ENCODE measurements at regions of chr12 and their contacts with region 1.

Region 1: GRCh38 chr12:31874961-31875608 is 84.1 kb upstream of the RESF1 start:
- DNase-seq: peak; percentile 93
- H3K4me3 ChIP-seq: no peak overlapping the region
- H3K27ac ChIP-seq: peak overlapping the region; percentile 83
- H3K4me1 ChIP-seq: peaks cover 28% of the 10 kb centered on the region
- H3K27me3 ChIP-seq: no peaks in the 10 kb centered on the region
- CTCF ChIP-seq: no peak
- POLR2A ChIP-seq: no peak

Region 2: DNA sequence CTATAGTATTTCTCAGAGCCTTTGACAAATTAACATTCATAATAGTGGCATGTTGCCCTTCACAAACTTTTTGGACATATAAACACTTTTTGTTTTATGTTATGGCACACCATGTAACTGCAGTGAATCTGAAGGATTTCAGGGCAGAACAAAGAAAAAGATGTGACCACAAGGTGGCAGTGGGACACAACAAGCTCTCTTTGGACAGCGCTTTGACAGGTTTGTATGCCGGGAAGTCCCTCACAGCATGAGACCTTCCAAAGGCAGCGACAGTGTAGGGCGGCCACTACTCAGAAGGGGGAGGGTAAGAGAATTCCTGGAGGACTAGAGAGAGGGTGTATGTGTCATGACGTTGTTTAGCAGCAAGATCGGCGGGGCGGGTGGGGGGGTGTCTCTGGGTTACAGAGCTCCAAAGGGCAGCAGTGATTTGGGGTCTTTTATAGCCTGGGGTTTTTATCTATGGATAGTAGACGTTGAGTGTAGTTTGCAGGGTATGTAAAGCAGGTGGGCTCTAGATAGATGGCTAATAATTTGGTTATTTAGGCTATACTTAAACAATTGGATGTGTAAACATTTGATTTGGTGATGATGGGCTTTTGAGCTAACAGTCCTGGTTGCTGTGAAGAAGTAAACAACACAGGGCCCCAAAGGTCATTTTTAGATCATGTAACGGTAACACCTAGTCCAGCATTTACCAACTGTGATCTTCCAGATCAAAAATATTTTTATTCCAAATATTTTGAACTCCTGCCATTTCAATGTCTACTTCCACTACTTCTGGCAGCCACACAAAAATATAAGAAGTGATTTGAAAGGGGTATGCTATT is 192.7 kb before region 1 on chr12:
- CTCF ChIA-PET with region 1: interaction called, 3 read pairs
- POLR2A ChIA-PET with region 1: no interaction called
- dilution Hi-C with region 1: no loop called
- intact Hi-C with region 1: loop called (anchors 10 kb)
- DNase-seq: peak; percentile 87
- H3K4me3 ChIP-seq: no peak overlapping the region
- H3K27ac ChIP-seq: no peak overlapping the region
- H3K4me1 ChIP-seq: no peaks in the 10 kb centered on the region
- H3K27me3 ChIP-seq: no peaks in the 10 kb centered on the region
- CTCF ChIP-seq: peak; percentile 69 to 71
- POLR2A ChIP-seq: no peak

Region 3: DNA sequence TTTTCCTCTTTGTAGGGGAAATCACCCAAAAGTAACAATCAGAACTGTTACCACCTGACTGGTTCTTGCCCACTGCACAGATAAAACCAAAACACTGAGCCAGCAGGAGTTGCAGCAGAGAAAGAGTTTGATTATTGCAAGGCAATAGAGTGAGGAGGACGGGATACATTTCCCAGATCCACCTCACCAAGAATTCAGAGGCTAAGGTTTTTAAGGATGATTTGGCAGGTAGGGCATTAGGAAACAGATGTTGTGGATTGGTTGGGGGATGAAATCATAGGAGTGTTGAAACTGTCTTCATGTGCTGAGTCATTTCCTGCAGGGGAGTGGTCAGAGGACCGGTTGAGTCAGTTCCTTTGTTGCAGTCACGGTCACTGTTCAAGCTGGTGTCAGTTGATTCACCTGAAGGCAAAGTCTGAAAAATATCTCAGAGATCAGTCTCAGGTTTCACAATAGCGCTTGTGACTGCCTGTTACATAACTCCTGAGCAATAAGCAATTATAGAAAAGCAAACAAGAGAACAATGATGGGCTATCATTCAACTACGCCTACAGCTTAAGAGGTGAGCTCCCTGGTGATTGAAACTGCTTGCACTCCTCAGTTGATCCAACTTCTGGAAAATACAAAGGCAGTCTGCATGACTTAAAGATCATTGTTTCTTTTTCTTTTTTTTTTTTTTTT is 125.9 kb before region 1 on chr12:
- CTCF ChIA-PET with region 1: no interaction called
- POLR2A ChIA-PET with region 1: no interaction called
- dilution Hi-C with region 1: no loop called
- intact Hi-C with region 1: loop called (anchors 1 kb)
- DNase-seq: peak; percentile 98
- H3K4me3 ChIP-seq: no peak overlapping the region
- H3K27ac ChIP-seq: peak overlapping the region; percentile 93
- H3K4me1 ChIP-seq: peaks cover 42% of the 10 kb centered on the region
- H3K27me3 ChIP-seq: no peaks in the 10 kb centered on the region
- CTCF ChIP-seq: no peak
- POLR2A ChIP-seq: peak; percentile 33

Region 4: GRCh38 chr12:31959161-31959700 is 84.1 kb after region 1 on chr12 and contains the start of gene RESF1:
- CTCF ChIA-PET with region 1: no interaction called
- POLR2A ChIA-PET with region 1: no interaction called
- dilution Hi-C with region 1: no loop called
- intact Hi-C with region 1: loop called (anchors 1 kb)
- DNase-seq: peak; percentile 88
- H3K4me3 ChIP-seq: peak within 1 kb of the TSS; percentile 72 to 98 (median 88)
- H3K27ac ChIP-seq: peak within 1 kb of the TSS; percentile 74
- H3K4me1 ChIP-seq: peaks cover 21% of the 10 kb centered on the region
- H3K27me3 ChIP-seq: no peaks in the 10 kb centered on the region
- CTCF ChIP-seq: no peak
- POLR2A ChIP-seq: peak; percentile 90
- total RNA-seq, gene RESF1: 62.1 and 70.0 TPM in 2 replicates

Region 5: DNA sequence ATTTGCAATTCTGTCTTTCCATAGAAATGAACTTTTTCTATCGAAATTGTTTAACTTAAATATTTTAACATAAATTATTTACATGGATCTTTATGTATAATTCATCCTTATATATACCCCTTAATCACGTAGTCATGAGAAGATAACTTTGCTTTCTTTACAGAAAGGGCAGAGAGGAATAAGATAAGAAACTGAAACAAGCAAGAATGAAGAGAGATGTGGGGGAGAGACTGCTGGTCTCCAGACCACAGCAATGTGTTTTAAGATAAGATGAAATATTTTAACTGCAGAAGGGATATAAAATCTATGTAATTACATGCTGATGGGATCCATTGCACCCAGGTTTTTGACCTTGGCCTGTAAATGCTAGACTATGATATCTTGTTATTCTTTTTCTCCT is 769.3 kb after region 1 on chr12:
- CTCF ChIA-PET with region 1: no interaction called
- POLR2A ChIA-PET with region 1: no interaction called
- dilution Hi-C with region 1: no loop called
- intact Hi-C with region 1: loop called (anchors 5 kb)
- DNase-seq: no peak
- H3K4me3 ChIP-seq: no peak overlapping the region
- H3K27ac ChIP-seq: no peak overlapping the region
- H3K4me1 ChIP-seq: no peaks in the 10 kb centered on the region
- H3K27me3 ChIP-seq: no peaks in the 10 kb centered on the region
- CTCF ChIP-seq: no peak
- POLR2A ChIP-seq: no peak

Measured in endothelial cell of umbilical vein (primary cell).